ENCODE measurements at regions of chr5 and their contacts with region 1.

Region 1: DNA sequence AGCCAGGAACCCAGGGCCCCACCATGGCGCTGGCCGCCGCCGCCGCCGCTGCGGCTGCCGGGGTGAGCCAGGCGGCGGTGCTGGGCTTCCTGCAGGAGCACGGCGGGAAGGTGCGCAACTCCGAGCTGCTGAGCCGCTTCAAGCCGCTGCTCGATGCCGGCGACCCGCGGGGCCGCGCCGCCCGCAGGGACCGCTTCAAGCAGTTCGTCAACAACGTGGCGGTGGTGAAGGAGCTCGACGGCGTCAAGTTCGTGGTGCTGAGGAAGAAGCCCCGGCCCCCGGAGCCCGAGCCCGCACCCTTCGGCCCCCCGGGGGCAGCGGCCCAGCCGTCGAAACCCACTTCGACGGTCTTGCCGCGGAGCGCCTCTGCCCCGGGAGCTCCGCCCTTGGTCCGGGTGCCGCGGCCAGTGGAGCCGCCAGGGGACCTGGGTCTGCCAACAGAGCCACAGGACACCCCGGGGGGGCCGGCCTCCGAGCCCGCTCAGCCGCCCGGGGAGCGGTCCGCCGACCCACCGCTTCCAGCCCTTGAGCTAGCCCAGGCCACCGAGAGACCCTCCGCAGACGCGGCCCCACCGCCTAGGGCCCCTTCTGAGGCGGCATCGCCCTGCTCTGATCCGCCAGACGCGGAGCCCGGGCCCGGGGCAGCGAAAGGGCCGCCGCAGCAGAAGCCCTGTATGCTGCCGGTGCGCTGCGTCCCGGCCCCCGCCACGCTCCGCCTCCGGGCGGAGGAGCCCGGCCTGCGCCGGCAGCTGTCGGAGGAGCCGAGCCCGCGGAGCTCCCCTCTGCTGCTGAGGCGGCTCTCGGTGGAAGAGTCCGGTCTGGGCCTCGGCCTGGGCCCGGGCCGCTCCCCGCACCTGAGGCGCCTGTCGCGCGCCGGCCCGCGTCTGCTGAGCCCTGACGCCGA is 749 bp downstream of the SOWAHA start:
- H3K4me3 Mint-ChIP-seq: peak overlapping the region; percentile 61
- H3K27ac Mint-ChIP-seq: no peak overlapping the region
- H3K4me1 Mint-ChIP-seq: peaks cover 10% of the 10 kb centered on the region
- H3K27me3 Mint-ChIP-seq: peaks cover 61% of the 10 kb centered on the region

Region 2: GRCh38 chr5:131952301-131952857 is 861.5 kb before region 1 on chr5:
- intact Hi-C with region 1: no loop called
- H3K4me3 Mint-ChIP-seq: no peak overlapping the region
- H3K27ac Mint-ChIP-seq: no peak overlapping the region
- H3K4me1 Mint-ChIP-seq: no peaks in the 10 kb centered on the region
- H3K27me3 Mint-ChIP-seq: peaks cover 6% of the 10 kb centered on the region

Region 3: GRCh38 chr5:131974956-131975726 is 838.7 kb before region 1 on chr5:
- intact Hi-C with region 1: no loop called
- H3K4me3 Mint-ChIP-seq: no peak overlapping the region
- H3K27ac Mint-ChIP-seq: no peak overlapping the region
- H3K4me1 Mint-ChIP-seq: no peaks in the 10 kb centered on the region
- H3K27me3 Mint-ChIP-seq: peaks cover 2% of the 10 kb centered on the region

Region 4: GRCh38 chr5:132777209-132778069 is 36.4 kb before region 1 on chr5 and contains the start of gene SEPTIN8:
- intact Hi-C with region 1: loop called (anchors 5 kb)
- H3K4me3 Mint-ChIP-seq: peak within 1 kb of the TSS; percentile 74
- H3K27ac Mint-ChIP-seq: peak within 1 kb of the TSS; percentile 32
- H3K4me1 Mint-ChIP-seq: peaks cover 39% of the 10 kb centered on the region
- H3K27me3 Mint-ChIP-seq: peaks cover 64% of the 10 kb centered on the region